ENCODE measurements at regions of chr14 and their contacts with region 1.

Region 1: GRCh38 chr14:39232554-39233415 is 930 bp upstream of the MIA2 start:
- DNase-seq: peak; percentile 22
- H3K4me3 Mint-ChIP-seq: peak overlapping the region; percentile 30
- H3K27ac Mint-ChIP-seq: peak overlapping the region; percentile 81
- H3K4me1 Mint-ChIP-seq: peaks cover 31% of the 10 kb centered on the region
- H3K27me3 Mint-ChIP-seq: no peaks in the 10 kb centered on the region
- CTCF ChIP-seq: no peak

Region 2: GRCh38 chr14:39043352-39043943 is 189.3 kb before region 1 on chr14:
- CTCF ChIA-PET with region 1: no interaction called
- intact Hi-C with region 1: no loop called
- DNase-seq: no peak
- H3K4me3 Mint-ChIP-seq: no peak overlapping the region
- H3K27ac Mint-ChIP-seq: no peak overlapping the region
- H3K4me1 Mint-ChIP-seq: no peaks in the 10 kb centered on the region
- H3K27me3 Mint-ChIP-seq: no peaks in the 10 kb centered on the region
- CTCF ChIP-seq: no peak

Region 3: GRCh38 chr14:39114073-39114838 is 118.5 kb before region 1 on chr14 and contains the start of gene GEMIN2:
- CTCF ChIA-PET with region 1: no interaction called
- intact Hi-C with region 1: loop called (anchors 5 kb)
- DNase-seq: peak; percentile 87
- H3K4me3 Mint-ChIP-seq: peak within 1 kb of the TSS; percentile 94
- H3K27ac Mint-ChIP-seq: peak within 1 kb of the TSS; percentile 17
- H3K4me1 Mint-ChIP-seq: peaks cover 8% of the 10 kb centered on the region
- H3K27me3 Mint-ChIP-seq: no peaks in the 10 kb centered on the region
- CTCF ChIP-seq: no peak
- total RNA-seq, gene GEMIN2: 15.5 and 20.1 TPM in 2 replicates

Region 4: GRCh38 chr14:39266871-39267591 is 34.2 kb after region 1 on chr14:
- CTCF ChIA-PET with region 1: interaction called, 3 read pairs
- intact Hi-C with region 1: loop called (anchors 2 kb)
- DNase-seq: peak; percentile 76
- H3K4me3 Mint-ChIP-seq: peak overlapping the region; percentile 75
- H3K27ac Mint-ChIP-seq: peak overlapping the region; percentile 85
- H3K4me1 Mint-ChIP-seq: peaks cover 31% of the 10 kb centered on the region
- H3K27me3 Mint-ChIP-seq: no peaks in the 10 kb centered on the region
- CTCF ChIP-seq: no peak

Region 5: GRCh38 chr14:39307815-39308214 is 75.0 kb after region 1 on chr14:
- CTCF ChIA-PET with region 1: no interaction called
- intact Hi-C with region 1: loop called (anchors 5 kb)
- DNase-seq: no peak
- H3K4me3 Mint-ChIP-seq: no peak overlapping the region
- H3K27ac Mint-ChIP-seq: no peak overlapping the region
- H3K4me1 Mint-ChIP-seq: no peaks in the 10 kb centered on the region
- H3K27me3 Mint-ChIP-seq: no peaks in the 10 kb centered on the region
- CTCF ChIP-seq: no peak

Region 6: GRCh38 chr14:39368261-39368959 is 135.6 kb after region 1 on chr14:
- CTCF ChIA-PET with region 1: interaction called, 8 read pairs
- intact Hi-C with region 1: loop called (anchors 1 kb)
- DNase-seq: peak; percentile 62
- H3K4me3 Mint-ChIP-seq: no peak overlapping the region
- H3K27ac Mint-ChIP-seq: no peak overlapping the region
- H3K4me1 Mint-ChIP-seq: peaks cover 9% of the 10 kb centered on the region
- H3K27me3 Mint-ChIP-seq: no peaks in the 10 kb centered on the region
- CTCF ChIP-seq: peak; percentile 58

Region 7: GRCh38 chr14:39426605-39427004 is 193.8 kb after region 1 on chr14:
- CTCF ChIA-PET with region 1: interaction called, 11 read pairs
- intact Hi-C with region 1: loop called (anchors 2 kb)
- DNase-seq: no peak
- H3K4me3 Mint-ChIP-seq: no peak overlapping the region
- H3K27ac Mint-ChIP-seq: peak overlapping the region; percentile 52
- H3K4me1 Mint-ChIP-seq: peaks cover 32% of the 10 kb centered on the region
- H3K27me3 Mint-ChIP-seq: no peaks in the 10 kb centered on the region
- CTCF ChIP-seq: no peak

Measured in Calu3 (cell line).